PC-9 (cell line): ENCODE measurements at regions of chr11 and their contacts with region 1.

Region 1: DNA sequence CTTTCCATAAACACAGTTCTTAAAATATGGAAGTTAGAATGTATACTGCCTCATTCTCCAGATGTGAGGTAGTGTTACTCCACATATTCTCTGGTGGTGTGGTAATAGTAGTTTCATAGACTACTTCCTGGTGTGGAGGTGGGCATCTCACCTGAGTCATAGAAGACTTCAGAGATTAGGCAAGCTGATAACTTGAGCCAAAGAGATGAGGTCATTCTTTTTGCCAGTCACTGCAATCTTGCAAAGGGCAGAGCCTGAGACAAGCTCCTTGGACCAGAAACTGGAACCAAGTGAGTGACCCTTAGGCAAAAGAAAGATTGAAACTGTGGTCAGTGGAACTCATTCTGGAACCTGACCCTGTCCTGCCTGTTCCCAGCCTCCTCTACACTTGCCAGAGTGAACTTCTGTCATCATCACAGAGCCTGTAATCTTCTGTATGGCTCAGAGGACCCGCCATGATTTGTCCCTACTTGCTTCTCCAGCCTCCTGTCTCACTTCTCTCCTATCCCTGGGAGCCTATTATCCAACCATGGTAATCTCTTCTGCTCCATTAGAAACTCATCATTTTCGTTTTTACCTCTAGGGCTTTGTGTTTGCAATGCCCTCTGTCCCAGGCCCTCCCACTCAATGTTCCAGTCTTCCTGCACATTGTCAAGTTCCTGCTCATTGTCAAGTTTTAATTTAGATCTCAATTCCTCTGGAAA is 10.6 kb upstream of the CCDC83 start:
- DNase-seq: peak; percentile 68 to 100
- H3K4me3 ChIP-seq: peak overlapping the region; percentile 22; the same call in 1 of the 2 replicates
- H3K27ac ChIP-seq: peak overlapping the region; percentile 94
- H3K4me1 ChIP-seq: peaks cover 29% of the 10 kb centered on the region
- H3K27me3 ChIP-seq: no peaks in the 10 kb centered on the region
- CTCF ChIP-seq: no peak

Region 2: DNA sequence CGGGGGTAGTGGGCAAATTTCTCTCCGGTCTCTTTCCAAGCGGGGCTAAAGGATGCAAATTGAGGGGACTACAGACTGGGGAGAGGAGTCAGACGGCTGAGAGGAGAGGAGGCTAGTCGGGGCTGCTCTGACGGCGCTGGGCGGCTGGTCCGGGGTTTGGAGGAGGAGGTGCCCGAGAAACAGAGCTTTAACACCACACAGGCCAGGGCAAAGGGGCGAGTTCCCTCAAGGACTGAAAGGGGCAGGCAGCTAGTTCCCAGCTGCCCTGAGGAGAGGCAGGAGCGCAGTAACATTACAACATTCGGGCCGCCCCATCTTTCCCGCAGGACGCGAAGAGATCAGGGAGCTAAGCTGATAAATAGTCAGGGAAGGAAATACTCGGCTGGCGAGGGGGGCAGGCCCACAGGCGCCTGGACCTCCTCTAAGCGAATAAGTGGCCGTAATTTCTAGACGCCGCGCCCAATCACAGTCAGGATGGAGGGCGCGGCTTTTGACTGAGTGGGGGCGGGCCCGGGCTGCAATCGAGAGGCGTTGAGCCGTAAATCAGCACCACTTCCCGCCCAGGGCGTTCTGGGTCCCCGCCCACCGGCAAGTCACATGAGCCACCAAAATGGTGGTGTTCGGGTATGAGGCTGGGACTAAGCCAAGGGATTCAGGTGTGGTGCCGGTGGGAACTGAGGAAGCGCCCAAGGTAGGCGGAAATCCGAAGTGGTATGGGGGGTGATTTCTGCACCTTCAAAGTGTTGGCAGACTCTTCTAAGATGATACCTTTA is 216.4 kb before region 1 on chr11 and contains the start of gene TMEM126B:
- CTCF ChIA-PET with region 1: no interaction called
- POLR2A ChIA-PET with region 1: interaction called, 3 read pairs
- intact Hi-C with region 1: loop called (anchors 10 kb)
- DNase-seq: peak; percentile 96 to 99
- H3K4me3 ChIP-seq: peak within 1 kb of the TSS; percentile 79
- H3K27ac ChIP-seq: peak within 1 kb of the TSS; percentile 65
- H3K4me1 ChIP-seq: peaks cover 29% of the 10 kb centered on the region
- H3K27me3 ChIP-seq: no peaks in the 10 kb centered on the region
- CTCF ChIP-seq: no peak
- total RNA-seq, gene TMEM126B: 32.6 and 38.1 TPM in 2 replicates

Region 3: GRCh38 chr11:85724748-85725465 is 119.7 kb before region 1 on chr11:
- CTCF ChIA-PET with region 1: no interaction called
- POLR2A ChIA-PET with region 1: no interaction called
- intact Hi-C with region 1: loop called (anchors 5 kb)
- DNase-seq: no peak
- H3K4me3 ChIP-seq: no peak overlapping the region
- H3K27ac ChIP-seq: no peak overlapping the region
- H3K4me1 ChIP-seq: peaks cover 32% of the 10 kb centered on the region
- H3K27me3 ChIP-seq: no peaks in the 10 kb centered on the region
- CTCF ChIP-seq: no peak

Region 4: DNA sequence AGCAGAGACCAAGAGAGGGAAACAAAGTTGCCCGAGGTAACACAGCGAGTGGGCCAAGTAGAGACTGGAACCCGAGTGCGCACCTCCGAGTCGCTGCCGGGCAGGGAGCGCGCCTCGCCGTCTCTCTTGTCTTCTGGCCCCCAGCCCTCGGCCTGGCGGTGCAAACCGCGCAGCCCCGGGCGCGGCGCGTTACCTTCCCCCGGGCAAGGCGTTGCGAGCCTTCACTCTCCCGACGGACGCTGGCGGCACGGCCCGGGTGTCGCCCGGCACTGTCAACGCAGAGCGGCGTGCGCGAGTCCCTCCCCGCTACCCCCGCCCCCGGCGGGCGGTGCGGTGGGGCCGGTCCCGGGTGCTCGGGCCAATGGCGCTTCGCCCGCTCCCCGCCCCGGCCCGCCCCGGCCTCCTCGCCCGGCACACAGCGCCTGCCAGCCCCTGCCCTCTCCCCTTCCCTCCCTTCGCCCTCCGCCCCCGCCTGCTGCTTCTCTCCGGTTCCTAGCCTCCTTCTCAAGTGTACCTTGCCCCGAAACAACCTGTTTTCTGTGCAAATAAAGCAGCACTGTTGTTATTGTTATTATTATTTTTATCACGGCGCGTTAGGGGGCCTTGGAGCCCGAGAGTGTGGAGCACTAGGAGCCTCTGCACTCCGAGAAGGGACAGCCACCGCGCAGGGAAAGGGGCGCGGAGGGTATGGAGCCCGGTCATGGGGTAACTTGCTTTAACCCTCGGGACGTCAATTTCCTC is 33.5 kb before region 1 on chr11 and contains the start of gene SYTL2:
- CTCF ChIA-PET with region 1: no interaction called
- POLR2A ChIA-PET with region 1: no interaction called
- intact Hi-C with region 1: loop called (anchors 2 kb)
- DNase-seq: peak; percentile 73 to 76
- H3K4me3 ChIP-seq: peak within 1 kb of the TSS; percentile 81
- H3K27ac ChIP-seq: no peak within 1 kb of the TSS
- H3K4me1 ChIP-seq: peaks cover 34% of the 10 kb centered on the region
- H3K27me3 ChIP-seq: no peaks in the 10 kb centered on the region
- CTCF ChIP-seq: no peak
- total RNA-seq, gene SYTL2: 13.3 and 16.0 TPM in 2 replicates

Region 5: GRCh38 chr11:86483940-86484794 is 639.6 kb after region 1 on chr11:
- CTCF ChIA-PET with region 1: no interaction called
- POLR2A ChIA-PET with region 1: interaction called, 23 read pairs
- intact Hi-C with region 1: no loop called
- DNase-seq: peak; percentile 87 to 100
- H3K4me3 ChIP-seq: peak overlapping the region; percentile 4; the same call in 1 of the 2 replicates
- H3K27ac ChIP-seq: peak overlapping the region; percentile 97
- H3K4me1 ChIP-seq: peaks cover 50% of the 10 kb centered on the region
- H3K27me3 ChIP-seq: no peaks in the 10 kb centered on the region
- CTCF ChIP-seq: no peak